Activated T-helper 1 cell treated with anti-CD3 and anti-CD28 coated beads, Interleukin-12 subunit alpha, Interleukin-12 subunit beta, Interleukin-2, Interleukin-4 antibody, amounts not matched to agents 30 ng/mL and 10 ng/mL and 1 ng/mL, durations not matched to agents 14 hours and 24 hours and 36 hours (primary cell): ENCODE measurements at regions of chr10 and their contacts with region 1.

Region 1: GRCh38 chr10:104291439-104291951 is 22.5 kb downstream of the GSTO2 start:
- DNase-seq: peak; percentile 82
- H3K4me3 Mint-ChIP-seq: no peak overlapping the region
- H3K27ac Mint-ChIP-seq: peak overlapping the region; percentile 0
- H3K4me1 Mint-ChIP-seq: peaks cover 16% of the 10 kb centered on the region
- H3K27me3 Mint-ChIP-seq: peaks cover 40% of the 10 kb centered on the region

Region 2: GRCh38 chr10:104328896-104329710 is 37.6 kb after region 1 on chr10:
- intact Hi-C with region 1: loop called (anchors 2 kb)
- DNase-seq: peak; percentile 56
- H3K4me3 Mint-ChIP-seq: peak overlapping the region; percentile 68
- H3K27ac Mint-ChIP-seq: peak overlapping the region; percentile 93
- H3K4me1 Mint-ChIP-seq: peaks cover 100% of the 10 kb centered on the region
- H3K27me3 Mint-ChIP-seq: no peaks in the 10 kb centered on the region

Region 3: GRCh38 chr10:104337974-104338735 is 46.7 kb after region 1 on chr10 and contains the start of gene ITPRIP:
- intact Hi-C with region 1: loop called (anchors 1 kb)
- DNase-seq: peak; percentile 68
- H3K4me3 Mint-ChIP-seq: peak within 1 kb of the TSS; percentile 100
- H3K27ac Mint-ChIP-seq: peak within 1 kb of the TSS; percentile 100
- H3K4me1 Mint-ChIP-seq: peaks cover 57% of the 10 kb centered on the region
- H3K27me3 Mint-ChIP-seq: peaks cover 5% of the 10 kb centered on the region
- total RNA-seq, gene ITPRIP: 17.3 and 18.1 TPM in 2 replicates